CD8-positive, alpha-beta T cell (primary cell): ENCODE measurements at regions of chr17 and their contacts with region 1.

Region 1: GRCh38 chr17:58006924-58007780 is at the start of gene SRSF1:
- DNase-seq: peak; percentile 93 to 100 (median 98)
- ATAC-seq: peak; percentile 86
- H3K4me3 ChIP-seq: peak within 1 kb of the TSS; percentile 90 to 100
- H3K4me3 Mint-ChIP-seq: peak within 1 kb of the TSS; percentile 100
- H3K27ac ChIP-seq: peak within 1 kb of the TSS; percentile 85 to 97
- H3K27ac Mint-ChIP-seq: peak within 1 kb of the TSS; percentile 100
- H3K4me1 ChIP-seq: peaks cover 36% of the 10 kb centered on the region
- H3K4me1 Mint-ChIP-seq: peaks cover 55% of the 10 kb centered on the region
- H3K27me3 ChIP-seq: no peaks in the 10 kb centered on the region
- H3K27me3 Mint-ChIP-seq: no peaks in the 10 kb centered on the region
- CTCF ChIP-seq: no peak
- total RNA-seq, gene SRSF1: 79.2 to 94.1 TPM

Region 2: DNA sequence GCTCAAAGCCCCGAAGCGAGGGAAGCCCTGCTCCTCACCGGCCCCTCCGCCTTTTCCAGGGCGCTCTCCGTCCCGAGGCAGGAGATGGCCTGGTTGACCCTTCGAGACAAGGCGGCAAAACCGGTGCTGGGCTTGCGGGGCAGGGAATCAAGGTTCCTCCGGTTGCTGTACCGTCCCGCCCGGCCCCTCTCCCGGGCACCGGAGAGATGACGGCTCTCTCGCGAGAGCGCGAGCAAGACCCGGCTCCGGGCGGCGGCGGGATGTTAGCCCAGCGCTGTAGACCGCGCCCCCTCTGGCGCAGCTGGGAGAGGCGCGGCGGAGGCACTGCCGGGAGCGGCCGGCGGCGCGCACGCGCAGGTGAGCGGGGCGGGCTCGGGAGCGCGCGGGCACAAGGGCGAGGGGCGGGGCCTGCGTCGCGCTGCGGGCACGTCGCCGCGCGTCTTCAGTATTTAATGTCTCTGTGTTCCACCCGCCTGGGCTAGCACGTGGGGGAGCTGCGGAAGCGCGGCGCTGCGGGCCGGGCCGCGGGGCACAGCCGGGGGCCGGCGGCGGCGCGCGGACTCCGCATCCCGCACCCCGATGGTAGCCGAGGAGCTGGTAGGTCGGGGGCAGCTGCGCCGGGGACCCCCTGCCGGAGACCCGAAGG is 922.2 kb before region 1 on chr17 and contains the start of gene AKAP1:
- CTCF ChIA-PET with region 1: no interaction called
- POLR2A ChIA-PET with region 1: no interaction called
- intact Hi-C with region 1: loop called in 1 of 2 experiments (anchors 2 kb)
- DNase-seq: peak; percentile 89 to 98 (median 94)
- ATAC-seq: peak; percentile 86
- H3K4me3 ChIP-seq: peak within 1 kb of the TSS; percentile 88 to 95
- H3K4me3 Mint-ChIP-seq: peak within 1 kb of the TSS; percentile 91
- H3K27ac ChIP-seq: peak within 1 kb of the TSS; percentile 87 to 93
- H3K27ac Mint-ChIP-seq: peak within 1 kb of the TSS; percentile 93
- H3K4me1 ChIP-seq: peaks cover 12% of the 10 kb centered on the region
- H3K4me1 Mint-ChIP-seq: peaks cover 38% of the 10 kb centered on the region
- H3K27me3 ChIP-seq: no peaks in the 10 kb centered on the region
- H3K27me3 Mint-ChIP-seq: no peaks in the 10 kb centered on the region
- CTCF ChIP-seq: no peak
- total RNA-seq, gene AKAP1: 20.6 to 23.5 TPM

Region 3: GRCh38 chr17:57987580-57988421 is 19.4 kb before region 1 on chr17 and contains the start of gene VEZF1:
- CTCF ChIA-PET with region 1: interaction called, 53 read pairs
- POLR2A ChIA-PET with region 1: interaction called, 19 read pairs
- intact Hi-C with region 1: loop called (anchors 1 kb)
- DNase-seq: peak; percentile 53 to 91 (median 79)
- ATAC-seq: peak; percentile 67
- H3K4me3 ChIP-seq: peak within 1 kb of the TSS; percentile 83 to 90
- H3K4me3 Mint-ChIP-seq: peak within 1 kb of the TSS; percentile 94
- H3K27ac ChIP-seq: peak within 1 kb of the TSS; percentile 57 to 72
- H3K27ac Mint-ChIP-seq: peak within 1 kb of the TSS; percentile 93
- H3K4me1 ChIP-seq: peaks cover 49% of the 10 kb centered on the region
- H3K4me1 Mint-ChIP-seq: peaks cover 63% of the 10 kb centered on the region
- H3K27me3 ChIP-seq: no peaks in the 10 kb centered on the region
- H3K27me3 Mint-ChIP-seq: no peaks in the 10 kb centered on the region
- CTCF ChIP-seq: no peak
- total RNA-seq, gene VEZF1: 45.2 to 46.6 TPM

Region 4: DNA sequence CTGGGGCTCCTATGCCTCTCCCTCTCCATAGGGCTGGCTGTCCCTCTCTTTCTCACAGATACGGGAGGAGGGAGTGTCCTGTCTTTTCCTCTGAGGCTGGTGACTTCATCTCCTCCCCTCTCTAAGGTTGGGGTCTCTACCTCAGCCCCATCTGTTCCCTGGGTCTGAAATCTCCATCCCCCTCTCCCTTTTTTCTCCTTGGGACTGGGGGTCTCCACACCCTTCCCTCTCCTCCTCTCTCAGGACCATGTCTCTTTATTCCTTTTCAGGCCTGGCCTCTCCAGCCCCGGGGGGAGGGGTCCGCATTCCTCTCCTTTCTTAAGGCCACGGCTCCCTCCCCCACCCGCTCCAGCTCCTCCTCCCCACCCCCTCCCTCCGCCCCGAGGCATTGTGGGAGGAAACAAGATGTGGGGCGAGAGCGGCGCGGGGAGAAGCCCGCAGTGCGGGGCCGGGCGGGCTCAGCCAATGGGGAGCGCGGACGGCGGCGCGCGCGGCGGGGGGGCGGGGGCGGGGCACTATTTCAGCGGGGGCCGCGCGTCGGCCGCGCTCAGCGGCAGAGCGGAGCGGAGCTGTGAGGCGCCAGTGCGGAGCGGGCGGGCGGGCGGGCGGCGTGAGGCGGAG is 75.8 kb after region 1 on chr17 and contains the start of gene DYNLL2:
- CTCF ChIA-PET with region 1: interaction called, 8 read pairs
- POLR2A ChIA-PET with region 1: interaction called, 13 read pairs
- intact Hi-C with region 1: loop called (anchors 1 kb)
- DNase-seq: peak; percentile 76 to 93 (median 88)
- ATAC-seq: peak; percentile 69
- H3K4me3 ChIP-seq: peak within 1 kb of the TSS; percentile 60 to 62
- H3K4me3 Mint-ChIP-seq: peak within 1 kb of the TSS; percentile 89
- H3K27ac ChIP-seq: peak within 1 kb of the TSS; percentile 81 to 85
- H3K27ac Mint-ChIP-seq: peak within 1 kb of the TSS; percentile 88
- H3K4me1 ChIP-seq: peaks cover 33% of the 10 kb centered on the region
- H3K4me1 Mint-ChIP-seq: peaks cover 33% of the 10 kb centered on the region
- H3K27me3 ChIP-seq: no peaks in the 10 kb centered on the region
- H3K27me3 Mint-ChIP-seq: no peaks in the 10 kb centered on the region
- CTCF ChIP-seq: no peak
- total RNA-seq, gene DYNLL2: 30.5 to 30.6 TPM

Region 5: DNA sequence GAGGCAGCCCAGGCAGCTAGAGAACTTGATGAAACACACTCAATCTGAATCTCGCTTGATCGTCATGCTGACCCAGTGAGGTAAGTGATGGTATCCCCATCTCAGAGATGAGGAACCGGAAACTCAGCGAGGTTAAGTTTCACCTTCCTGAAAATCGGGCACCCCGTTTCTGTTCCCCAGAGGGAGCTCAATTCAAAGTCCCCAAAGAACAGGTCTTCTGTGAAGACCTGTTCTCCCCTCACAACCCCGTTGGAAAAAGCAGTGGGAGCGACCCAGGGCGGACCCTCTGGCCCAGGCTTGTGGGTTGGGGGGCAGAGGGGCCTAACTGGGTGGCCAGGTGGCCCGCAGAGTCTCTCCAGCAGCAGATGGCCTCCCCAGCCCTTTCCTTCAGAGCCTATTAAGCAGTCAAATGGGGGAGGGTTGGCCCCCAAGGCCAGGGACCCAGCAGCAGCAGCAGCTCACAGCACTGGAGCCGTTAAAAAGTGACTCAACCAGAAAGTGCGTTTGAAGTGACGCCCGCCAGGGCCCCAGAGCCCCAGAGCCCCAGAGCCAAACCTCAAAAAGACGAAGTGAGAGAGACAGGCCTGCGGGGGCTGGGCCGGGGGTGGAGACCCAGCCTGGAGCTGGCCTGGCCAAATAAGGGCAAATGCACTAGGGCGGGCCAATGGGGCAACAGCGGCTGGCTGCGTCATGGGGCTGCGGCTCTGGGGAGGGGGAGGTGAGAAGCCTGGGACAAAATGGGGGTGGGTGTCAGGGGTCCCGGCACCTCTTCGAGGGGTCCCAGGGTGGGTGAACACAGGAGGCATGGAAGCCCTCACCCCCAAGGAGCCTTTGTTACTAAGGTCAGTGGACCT is 330.7 kb after region 1 on chr17:
- CTCF ChIA-PET with region 1: no interaction called
- POLR2A ChIA-PET with region 1: no interaction called
- intact Hi-C with region 1: loop called (anchors 2 to 10 kb)
- DNase-seq: peak; percentile 81 to 96 (median 92)
- ATAC-seq: peak; percentile 72
- H3K4me3 ChIP-seq: peak overlapping the region; percentile 90 to 99
- H3K4me3 Mint-ChIP-seq: peak overlapping the region; percentile 92
- H3K27ac ChIP-seq: peak overlapping the region; percentile 92 to 99
- H3K27ac Mint-ChIP-seq: peak overlapping the region; percentile 97
- H3K4me1 ChIP-seq: peaks cover 72% of the 10 kb centered on the region
- H3K4me1 Mint-ChIP-seq: peaks cover 83% of the 10 kb centered on the region
- H3K27me3 ChIP-seq: no peaks in the 10 kb centered on the region
- H3K27me3 Mint-ChIP-seq: no peaks in the 10 kb centered on the region
- CTCF ChIP-seq: no peak

Region 6: DNA sequence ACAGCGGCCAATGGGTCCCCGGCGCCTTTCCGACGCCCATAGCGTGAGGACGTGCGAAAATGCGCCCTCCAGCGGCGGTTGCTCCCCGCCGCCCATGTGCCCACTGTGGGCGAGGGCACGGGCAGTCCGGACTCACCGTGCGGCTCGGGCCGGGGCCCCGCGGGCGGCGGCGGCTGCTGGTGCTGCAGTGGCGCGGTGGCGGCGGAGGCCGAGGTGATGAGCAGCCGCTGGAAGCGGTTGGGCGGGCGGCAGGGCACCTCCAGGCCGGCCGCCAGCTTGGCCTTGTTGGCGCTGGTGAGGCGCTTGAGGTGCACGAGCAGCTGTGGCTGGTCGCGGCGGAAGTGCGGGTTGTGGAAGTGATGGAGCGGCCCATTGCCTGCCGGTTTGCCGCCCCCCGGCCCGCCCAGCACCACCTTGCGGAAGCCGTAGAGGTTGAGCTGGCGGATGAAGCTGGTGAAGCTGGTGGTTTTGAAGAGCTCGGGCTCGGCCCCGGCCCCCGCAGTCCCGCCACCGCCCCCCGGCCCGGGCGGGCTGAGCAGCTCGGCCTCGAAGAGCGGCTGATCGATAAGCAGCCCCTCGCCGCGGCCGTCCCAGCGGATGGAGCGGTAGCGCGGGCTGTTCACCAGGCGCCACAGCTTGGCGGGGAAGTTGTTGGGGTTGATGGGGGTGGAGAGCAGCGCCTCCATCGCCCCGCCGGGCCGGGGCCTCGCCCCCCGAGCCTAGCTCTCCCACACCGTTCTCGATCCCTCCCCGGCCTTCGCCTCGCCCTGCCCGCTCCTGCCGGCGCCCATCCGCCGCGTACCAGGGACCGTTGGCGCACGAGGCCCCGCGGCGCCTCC is 480.7 kb after region 1 on chr17 and contains the start of gene HSF5:
- CTCF ChIA-PET with region 1: no interaction called
- POLR2A ChIA-PET with region 1: no interaction called
- intact Hi-C with region 1: loop called in 1 of 2 experiments (anchors 5 kb)
- DNase-seq: peak; percentile 52 to 89 (median 76)
- ATAC-seq: peak; percentile 94
- H3K4me3 ChIP-seq: peak within 1 kb of the TSS; percentile 29 to 37
- H3K4me3 Mint-ChIP-seq: peak within 1 kb of the TSS; percentile 69
- H3K27ac ChIP-seq: peak within 1 kb of the TSS; percentile 22 to 40
- H3K27ac Mint-ChIP-seq: peak within 1 kb of the TSS; percentile 70
- H3K4me1 ChIP-seq: peaks cover 14% of the 10 kb centered on the region
- H3K4me1 Mint-ChIP-seq: peaks cover 16% of the 10 kb centered on the region
- H3K27me3 ChIP-seq: no peaks in the 10 kb centered on the region
- H3K27me3 Mint-ChIP-seq: no peaks in the 10 kb centered on the region
- CTCF ChIP-seq: peak; percentile 68
- total RNA-seq, gene HSF5: 1.1 to 1.6 TPM